ENCODE measurements at regions of chr7 and their contacts with region 1.

Region 1: DNA sequence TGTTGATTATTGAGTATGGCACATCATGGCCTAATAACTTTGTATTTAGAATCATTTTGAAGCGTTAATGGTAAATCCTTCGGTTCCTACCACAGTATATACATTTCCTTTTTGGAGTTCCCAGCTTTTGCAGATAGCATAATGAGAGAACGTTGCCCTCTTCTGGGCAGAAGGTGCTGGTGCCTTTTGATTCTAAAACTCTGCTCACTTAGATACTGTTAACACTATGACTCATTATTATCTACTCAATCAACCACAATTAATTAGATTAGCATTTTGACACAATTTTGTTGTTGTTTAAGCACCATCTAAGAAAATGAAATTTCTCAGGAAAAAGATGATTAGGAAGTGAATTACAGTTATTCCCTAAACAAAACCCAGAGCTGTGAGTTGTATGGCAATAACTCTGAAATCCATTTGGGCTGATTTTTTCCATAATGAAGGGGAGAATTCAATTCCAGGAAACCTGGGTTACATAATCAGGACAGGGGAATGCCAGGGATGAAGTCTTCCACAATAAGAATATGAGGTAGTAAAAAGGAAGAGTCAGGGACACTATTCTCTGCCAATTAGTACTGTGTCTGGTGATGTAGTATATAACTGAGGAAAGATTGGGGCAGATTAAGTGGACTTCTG is 11.5 kb upstream of the DLD start:
- DNase-seq: peak; percentile 52
- ATAC-seq: peak; percentile 47
- H3K4me3 ChIP-seq: no peak overlapping the region
- H3K27ac ChIP-seq: no peak overlapping the region
- H3K4me1 ChIP-seq: peaks cover 7 to 14% of the 10 kb centered on the region in 2 experiments
- H3K27me3 ChIP-seq: no peaks in the 10 kb centered on the region
- CTCF ChIP-seq: peak; percentile 65 to 88 (median 79); a peak in 5 of 6 replicates
- POLR2A ChIP-seq: no peak
- RAD21 ChIP-seq: peak; percentile 85

Region 2: DNA sequence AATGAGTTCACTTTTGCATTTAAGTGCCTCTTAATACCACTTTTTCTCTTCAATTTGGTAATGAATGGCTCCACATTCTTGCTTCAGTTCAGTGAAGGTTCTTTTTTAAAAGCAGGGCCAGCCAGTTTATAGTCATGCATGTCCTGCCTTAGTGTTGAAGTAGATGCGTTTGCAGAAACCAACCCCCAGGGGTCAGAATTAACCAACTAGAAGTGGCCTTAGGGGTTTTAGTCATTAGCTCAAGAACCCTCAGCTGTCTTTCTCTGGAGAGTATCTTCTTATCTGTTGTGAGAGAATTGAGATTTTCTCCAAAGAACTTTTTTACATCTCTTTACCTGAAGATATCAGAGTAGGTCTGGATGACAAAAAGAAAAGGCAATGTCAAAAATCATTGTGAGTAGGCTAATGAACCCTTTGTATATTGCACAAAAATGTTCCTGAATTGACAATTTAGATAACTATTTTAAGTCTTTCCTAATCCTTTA is 932.2 kb before region 1 on chr7:
- CTCF ChIA-PET with region 1: interaction called, 7 read pairs
- POLR2A ChIA-PET with region 1: no interaction called
- RAD21 ChIA-PET with region 1: no interaction called
- intact Hi-C with region 1: loop called (anchors 2 kb)
- DNase-seq: peak; percentile 68
- ATAC-seq: peak; percentile 97
- H3K4me3 ChIP-seq: no peak overlapping the region
- H3K27ac ChIP-seq: no peak overlapping the region
- H3K4me1 ChIP-seq: no peaks in the 10 kb centered on the region
- H3K27me3 ChIP-seq: no peaks in the 10 kb centered on the region
- CTCF ChIP-seq: peak; percentile 67 to 78 (median 73)
- POLR2A ChIP-seq: no peak
- RAD21 ChIP-seq: peak; percentile 87

Region 3: DNA sequence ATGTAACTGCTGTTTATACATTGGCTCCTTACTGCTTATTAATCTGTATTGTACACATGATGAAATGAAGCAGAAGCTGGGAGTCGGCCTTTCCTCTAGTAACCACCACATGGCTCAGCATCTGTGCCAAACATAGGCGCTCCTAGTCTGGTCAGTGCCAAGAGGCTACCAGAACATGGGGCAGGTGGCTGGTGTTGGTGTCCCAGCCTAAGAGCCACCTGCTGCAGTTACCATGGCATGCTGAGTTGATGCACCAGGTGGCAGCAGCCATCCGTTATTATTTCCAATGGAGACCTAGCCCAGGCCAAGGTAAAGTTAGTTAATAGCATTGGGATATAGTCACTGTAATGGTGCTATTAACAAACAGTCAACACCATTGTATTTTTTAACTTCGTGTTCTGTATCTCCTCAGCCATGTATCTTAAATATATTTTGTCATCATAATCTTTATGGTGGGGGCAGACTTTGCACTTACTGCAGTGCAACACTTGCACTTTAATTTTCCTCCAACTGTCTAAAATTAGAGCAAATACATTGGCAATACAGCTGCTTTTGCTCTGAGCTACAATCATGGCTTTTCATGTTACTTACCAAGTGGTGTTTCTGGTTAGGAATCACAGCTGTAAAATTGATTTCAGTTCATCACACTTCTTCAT is 677.6 kb before region 1 on chr7:
- CTCF ChIA-PET with region 1: interaction called, 9 read pairs
- POLR2A ChIA-PET with region 1: no interaction called
- RAD21 ChIA-PET with region 1: no interaction called
- intact Hi-C with region 1: loop called (anchors 2 kb)
- DNase-seq: peak; percentile 23
- ATAC-seq: peak; percentile 98
- H3K4me3 ChIP-seq: no peak overlapping the region
- H3K27ac ChIP-seq: no peak overlapping the region
- H3K4me1 ChIP-seq: no peaks in the 10 kb centered on the region
- H3K27me3 ChIP-seq: no peaks in the 10 kb centered on the region
- CTCF ChIP-seq: peak; percentile 41 to 72 (median 69); a peak in 5 of 6 replicates
- POLR2A ChIP-seq: no peak
- RAD21 ChIP-seq: peak; percentile 70

Region 4: GRCh38 chr7:107579885-107580715 is 299.4 kb before region 1 on chr7 and contains the start of gene BCAP29:
- CTCF ChIA-PET with region 1: no interaction called
- POLR2A ChIA-PET with region 1: no interaction called
- RAD21 ChIA-PET with region 1: no interaction called
- intact Hi-C with region 1: loop called (anchors 10 kb)
- DNase-seq: peak; percentile 38
- ATAC-seq: peak; percentile 94
- H3K4me3 ChIP-seq: peak within 1 kb of the TSS; percentile 76 to 82
- H3K27ac ChIP-seq: peak within 1 kb of the TSS; percentile 81
- H3K4me1 ChIP-seq: peaks cover 2 to 14% of the 10 kb centered on the region in 2 experiments; a peak in 3 of 4 replicates
- H3K27me3 ChIP-seq: no peaks in the 10 kb centered on the region
- CTCF ChIP-seq: peak in 1 of 3 experiments; percentile 28; a peak in 3 of 6 replicates
- POLR2A ChIP-seq: peak; percentile 47
- RAD21 ChIP-seq: peak; percentile 31; the same call in 1 of the 2 replicates
- total RNA-seq, gene BCAP29: 43.2 TPM

Region 5: GRCh38 chr7:107661865-107662379 is 217.6 kb before region 1 on chr7:
- CTCF ChIA-PET with region 1: no interaction called
- POLR2A ChIA-PET with region 1: no interaction called
- RAD21 ChIA-PET with region 1: no interaction called
- intact Hi-C with region 1: no loop called
- DNase-seq: no peak
- ATAC-seq: no peak
- H3K4me3 ChIP-seq: no peak overlapping the region
- H3K27ac ChIP-seq: no peak overlapping the region
- H3K4me1 ChIP-seq: peaks cover 0 to 16% of the 10 kb centered on the region in 2 experiments; a peak in 2 of 4 replicates
- H3K27me3 ChIP-seq: no peaks in the 10 kb centered on the region
- CTCF ChIP-seq: no peak
- POLR2A ChIP-seq: no peak
- RAD21 ChIP-seq: no peak

Region 6: GRCh38 chr7:107715531-107715930 is 164.0 kb before region 1 on chr7:
- CTCF ChIA-PET with region 1: no interaction called
- POLR2A ChIA-PET with region 1: no interaction called
- RAD21 ChIA-PET with region 1: no interaction called
- intact Hi-C with region 1: no loop called
- DNase-seq: no peak
- ATAC-seq: peak; percentile 46; the same call in 1 of the 2 replicates
- H3K4me3 ChIP-seq: no peak overlapping the region
- H3K27ac ChIP-seq: no peak overlapping the region
- H3K4me1 ChIP-seq: peaks cover 3 to 7% of the 10 kb centered on the region in 2 experiments; a peak in 2 of 4 replicates
- H3K27me3 ChIP-seq: no peaks in the 10 kb centered on the region
- CTCF ChIP-seq: no peak
- POLR2A ChIP-seq: no peak
- RAD21 ChIP-seq: no peak

Region 7: GRCh38 chr7:107743567-107744344 is 135.8 kb before region 1 on chr7 and contains the start of gene CBLL1:
- CTCF ChIA-PET with region 1: interaction called, 48 read pairs
- POLR2A ChIA-PET with region 1: interaction called, 11 read pairs
- RAD21 ChIA-PET with region 1: interaction called in 1 of 2 experiments, 8 read pairs
- intact Hi-C with region 1: loop called (anchors 2 kb)
- DNase-seq: peak; percentile 87
- ATAC-seq: peak; percentile 95
- H3K4me3 ChIP-seq: peak within 1 kb of the TSS; percentile 86 to 89
- H3K27ac ChIP-seq: peak within 1 kb of the TSS; percentile 86
- H3K4me1 ChIP-seq: peaks cover 15 to 22% of the 10 kb centered on the region in 2 experiments
- H3K27me3 ChIP-seq: no peaks in the 10 kb centered on the region
- CTCF ChIP-seq: peak; percentile 62 to 75 (median 64)
- POLR2A ChIP-seq: peak; percentile 27
- RAD21 ChIP-seq: peak; percentile 63
- total RNA-seq, gene CBLL1: 35.0 TPM

Region 8: GRCh38 chr7:108146070-108146837 is 266.7 kb after region 1 on chr7:
- CTCF ChIA-PET with region 1: interaction called, 27 read pairs
- POLR2A ChIA-PET with region 1: no interaction called
- RAD21 ChIA-PET with region 1: interaction called in 1 of 2 experiments, 6 read pairs
- intact Hi-C with region 1: loop called (anchors 5 kb)
- DNase-seq: peak; percentile 69
- ATAC-seq: peak; percentile 91
- H3K4me3 ChIP-seq: peak overlapping the region in 1 of 2 experiments; percentile 24; a peak in 2 of 4 replicates
- H3K27ac ChIP-seq: no peak overlapping the region
- H3K4me1 ChIP-seq: peaks cover 0 to 3% of the 10 kb centered on the region in 2 experiments; a peak in 1 of 4 replicates
- H3K27me3 ChIP-seq: no peaks in the 10 kb centered on the region
- CTCF ChIP-seq: peak; percentile 84 to 85 (median 85)
- POLR2A ChIP-seq: no peak
- RAD21 ChIP-seq: peak; percentile 95